Dorsolateral prefrontal cortex (tissue), 120 donors: ENCODE measurements at regions of chr9 and their contacts with region 1.

Region 1: GRCh38 chr9:120714088-120714845 is at the start of gene MEGF9:
- DNase-seq: peak; percentile 99 to 100 (median 99)
- H3K4me3 ChIP-seq: peak within 1 kb of the TSS; percentile 63 to 99 (median 90)
- H3K27ac ChIP-seq: peak within 1 kb of the TSS; percentile 86 to 99 (median 96)
- H3K27me3 ChIP-seq: no peaks in the 10 kb centered on the region
- CTCF ChIP-seq: peak in 29 of 56 donors; percentile 5 to 56 (median 22)
- total RNA-seq, gene MEGF9: 47.2 to 92.6 (median 64.9) TPM

Region 2: GRCh38 chr9:120531683-120532300 is 182.5 kb before region 1 on chr9:
- intact Hi-C with region 1: no loop called
- DNase-seq: no peak
- H3K4me3 ChIP-seq: no peak overlapping the region
- H3K27ac ChIP-seq: no peak overlapping the region
- H3K27me3 ChIP-seq: no peaks in the 10 kb centered on the region
- CTCF ChIP-seq: peak in 54 of 56 donors; percentile 9 to 66 (median 45)

Region 3: DNA sequence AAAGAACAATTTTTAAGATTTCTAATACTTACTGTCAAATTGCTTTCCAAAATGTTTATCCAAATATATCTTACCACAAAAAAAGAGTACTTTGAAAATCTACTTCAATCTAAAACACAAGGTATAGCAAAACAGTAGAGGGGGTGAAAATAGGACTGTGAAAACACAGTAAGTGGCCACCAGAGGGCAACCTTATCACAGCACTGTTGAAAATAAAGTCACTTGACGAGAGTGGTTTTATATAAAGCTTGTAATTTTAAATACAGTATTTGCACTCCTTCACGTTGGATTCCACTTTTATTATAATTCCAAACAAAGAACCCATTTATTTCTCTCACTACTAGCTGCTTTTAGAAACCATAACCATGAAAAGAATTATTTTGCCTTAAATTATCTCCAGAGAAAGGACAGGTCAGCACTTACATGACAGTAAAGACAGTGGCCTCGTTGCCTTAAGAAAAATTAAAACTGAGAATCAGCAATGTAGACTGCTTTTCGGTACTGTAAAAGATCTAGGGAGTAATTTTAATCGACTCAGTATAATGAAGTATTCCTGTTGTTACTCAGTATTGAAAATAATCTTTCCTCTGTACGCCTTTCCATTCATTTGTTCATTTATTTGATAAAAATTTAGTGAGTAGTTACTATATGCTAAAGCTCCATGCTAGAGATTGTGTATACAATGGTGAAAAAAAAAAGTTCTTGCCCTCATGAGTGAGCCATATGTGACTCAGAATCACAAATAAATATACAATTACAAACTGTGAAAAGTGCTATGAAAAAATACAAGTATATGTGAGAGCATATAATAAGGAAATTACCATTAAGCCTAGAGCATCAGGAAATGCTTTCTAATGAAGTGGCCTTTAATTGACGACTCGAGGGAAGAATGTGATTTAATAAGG is 94.3 kb before region 1 on chr9:
- intact Hi-C with region 1: loop called (anchors 2 to 5 kb)
- DNase-seq: peak in 5 of 10 donors; percentile 51 to 78 (median 64)
- H3K4me3 ChIP-seq: peak overlapping the region in 6 of 59 donors; percentile 0 to 36 (median 18)
- H3K27ac ChIP-seq: peak overlapping the region in 57 of 59 donors; percentile 4 to 97 (median 74)
- H3K27me3 ChIP-seq: no peaks in the 10 kb centered on the region
- CTCF ChIP-seq: peak; percentile 87 to 99 (median 94)

Region 4: GRCh38 chr9:120625222-120625621 is 89.0 kb before region 1 on chr9:
- intact Hi-C with region 1: loop called (anchors 2 to 5 kb)
- DNase-seq: no peak
- H3K4me3 ChIP-seq: no peak overlapping the region
- H3K27ac ChIP-seq: peak overlapping the region in 57 of 59 donors; percentile 22 to 97 (median 84)
- H3K27me3 ChIP-seq: no peaks in the 10 kb centered on the region
- CTCF ChIP-seq: no peak

Region 5: GRCh38 chr9:120636194-120636957 is 77.9 kb before region 1 on chr9:
- intact Hi-C with region 1: loop called in 1 of 2 experiments (anchors 5 kb)
- DNase-seq: no peak
- H3K4me3 ChIP-seq: no peak overlapping the region
- H3K27ac ChIP-seq: no peak overlapping the region
- H3K27me3 ChIP-seq: no peaks in the 10 kb centered on the region
- CTCF ChIP-seq: no peak

Region 6: DNA sequence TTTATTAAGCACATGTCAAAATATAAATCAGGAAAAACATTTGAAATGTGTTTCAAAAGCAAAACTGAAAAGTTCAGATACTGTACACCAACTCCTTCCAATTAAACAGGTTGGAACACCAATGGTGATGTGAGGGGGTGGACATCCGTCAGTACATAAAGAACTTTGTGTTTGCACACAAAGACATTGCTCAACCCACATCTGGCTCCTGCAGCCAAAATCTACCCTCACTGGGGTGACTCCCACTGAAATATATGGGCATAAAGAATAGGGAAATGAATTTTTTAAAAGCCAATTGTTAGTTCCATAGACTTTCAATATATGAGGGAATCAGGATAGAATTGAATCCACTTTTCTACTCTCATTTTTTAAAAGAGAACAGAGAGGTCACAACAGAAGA is 63.9 kb before region 1 on chr9:
- intact Hi-C with region 1: loop called in 1 of 2 experiments (anchors 5 kb)
- DNase-seq: no peak
- H3K4me3 ChIP-seq: no peak overlapping the region
- H3K27ac ChIP-seq: peak overlapping the region in 24 of 59 donors; percentile 3 to 64 (median 24)
- H3K27me3 ChIP-seq: no peaks in the 10 kb centered on the region
- CTCF ChIP-seq: no peak

Region 7: GRCh38 chr9:120792898-120793765 is 78.9 kb after region 1 on chr9 and contains the start of gene FBXW2:
- intact Hi-C with region 1: loop called in 1 of 2 experiments (anchors 5 kb)
- DNase-seq: peak; percentile 82 to 96 (median 90)
- H3K4me3 ChIP-seq: peak within 1 kb of the TSS; percentile 72 to 100 (median 95)
- H3K27ac ChIP-seq: peak within 1 kb of the TSS; percentile 7 to 97 (median 84)
- H3K27me3 ChIP-seq: no peaks in the 10 kb centered on the region
- CTCF ChIP-seq: peak in 43 of 56 donors; percentile 4 to 62 (median 31)
- total RNA-seq, gene FBXW2: 37.6 to 68.5 (median 52.8) TPM